ENCODE measurements at regions of chr12 and their contacts with region 1.

Region 1: DNA sequence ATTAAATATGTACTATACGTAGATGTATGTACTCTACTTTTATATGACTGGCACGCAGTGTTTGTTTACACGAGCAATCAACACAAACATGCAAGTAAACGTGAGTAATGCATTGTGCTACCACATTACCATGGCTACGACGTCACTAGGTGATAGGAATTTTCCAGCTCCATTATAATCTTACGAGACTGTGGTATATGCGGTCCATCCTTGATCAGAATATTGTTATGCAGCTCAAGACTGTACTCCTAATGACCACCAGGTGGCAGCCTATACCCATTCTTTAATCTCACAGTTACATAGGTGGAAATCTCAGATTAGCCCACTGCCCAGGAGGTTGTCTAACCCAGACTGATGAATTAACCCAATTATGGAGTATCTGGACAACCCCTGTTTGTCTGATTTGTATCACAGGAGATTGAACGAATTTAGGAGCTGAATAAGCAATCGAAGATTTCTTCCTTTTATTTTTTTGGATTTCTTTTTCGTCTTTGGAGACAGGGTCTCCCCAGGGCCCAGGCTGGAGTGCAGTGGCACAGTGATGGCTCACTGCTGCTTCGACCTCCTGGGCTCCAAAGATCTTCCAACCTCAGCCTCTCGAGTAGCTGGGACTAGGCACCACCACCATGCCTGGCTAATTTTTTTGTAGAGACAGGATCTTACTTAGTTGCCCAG is 8.7 kb upstream of the TESPA1 start:
- DNase-seq: peak; percentile 41
- ATAC-seq: peak; percentile 76
- H3K4me3 Mint-ChIP-seq: no peak overlapping the region
- H3K27ac Mint-ChIP-seq: no peak overlapping the region
- H3K4me1 Mint-ChIP-seq: peaks cover 26% of the 10 kb centered on the region
- H3K27me3 Mint-ChIP-seq: no peaks in the 10 kb centered on the region
- CTCF ChIP-seq: peak; percentile 75; the same call in 1 of the 2 replicates

Region 2: GRCh38 chr12:54977155-54977554 is 16.1 kb before region 1 on chr12:
- CTCF ChIA-PET with region 1: interaction called, 14 read pairs
- POLR2A ChIA-PET with region 1: no interaction called
- DNase-seq: no peak
- ATAC-seq: no peak
- H3K4me3 Mint-ChIP-seq: no peak overlapping the region
- H3K27ac Mint-ChIP-seq: no peak overlapping the region
- H3K4me1 Mint-ChIP-seq: peaks cover 18% of the 10 kb centered on the region
- H3K27me3 Mint-ChIP-seq: no peaks in the 10 kb centered on the region
- CTCF ChIP-seq: no peak

Region 3: DNA sequence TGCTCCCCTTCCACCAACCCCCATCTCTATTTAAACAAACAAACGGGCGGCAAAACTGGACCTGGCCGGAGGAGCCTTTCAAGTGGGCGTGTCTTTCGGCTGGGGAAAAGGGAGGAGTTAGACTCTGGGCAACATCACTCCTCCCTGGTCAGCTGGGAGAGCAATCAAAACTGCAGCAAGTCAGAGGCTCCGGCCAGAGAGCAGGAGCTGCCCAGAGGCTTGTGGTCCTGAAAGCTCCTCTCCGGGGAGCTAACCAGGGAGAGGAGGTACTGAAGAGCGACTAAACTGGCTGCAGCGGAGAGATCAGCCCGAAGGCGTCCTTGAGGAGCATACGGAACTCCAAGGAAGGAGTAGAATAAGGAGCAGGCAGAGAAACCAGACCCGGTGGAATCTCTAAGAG is 26.5 kb after region 1 on chr12 and contains the start of gene NEUROD4:
- CTCF ChIA-PET with region 1: interaction called, 11 read pairs
- POLR2A ChIA-PET with region 1: no interaction called
- DNase-seq: peak; percentile 92
- ATAC-seq: peak; percentile 100
- H3K4me3 Mint-ChIP-seq: peak within 1 kb of the TSS; percentile 69
- H3K27ac Mint-ChIP-seq: no peak within 1 kb of the TSS
- H3K4me1 Mint-ChIP-seq: peaks cover 28% of the 10 kb centered on the region
- H3K27me3 Mint-ChIP-seq: peaks cover 20% of the 10 kb centered on the region
- CTCF ChIP-seq: no peak
- total RNA-seq, gene NEUROD4: not detected in 3 replicates